ENCODE measurements at regions of chr20 and their contacts with region 1.

Region 1: GRCh38 chr20:9616833-9617489 is 102.6 kb downstream of the LAMP5 start:
- DNase-seq: peak; percentile 32
- ATAC-seq: peak; percentile 79
- H3K4me3 ChIP-seq: no peak overlapping the region
- H3K27ac ChIP-seq: no peak overlapping the region
- H3K4me1 ChIP-seq: no peaks in the 10 kb centered on the region
- H3K27me3 ChIP-seq: 0 out of 2 replicates have a peak, but pooled peaks cover 7% of the 10 kb centered on the region
- CTCF ChIP-seq: peak; percentile 62 to 91 (median 65); a peak in 5 of 6 replicates
- POLR2A ChIP-seq: no peak
- RAD21 ChIP-seq: peak; percentile 86

Region 2: DNA sequence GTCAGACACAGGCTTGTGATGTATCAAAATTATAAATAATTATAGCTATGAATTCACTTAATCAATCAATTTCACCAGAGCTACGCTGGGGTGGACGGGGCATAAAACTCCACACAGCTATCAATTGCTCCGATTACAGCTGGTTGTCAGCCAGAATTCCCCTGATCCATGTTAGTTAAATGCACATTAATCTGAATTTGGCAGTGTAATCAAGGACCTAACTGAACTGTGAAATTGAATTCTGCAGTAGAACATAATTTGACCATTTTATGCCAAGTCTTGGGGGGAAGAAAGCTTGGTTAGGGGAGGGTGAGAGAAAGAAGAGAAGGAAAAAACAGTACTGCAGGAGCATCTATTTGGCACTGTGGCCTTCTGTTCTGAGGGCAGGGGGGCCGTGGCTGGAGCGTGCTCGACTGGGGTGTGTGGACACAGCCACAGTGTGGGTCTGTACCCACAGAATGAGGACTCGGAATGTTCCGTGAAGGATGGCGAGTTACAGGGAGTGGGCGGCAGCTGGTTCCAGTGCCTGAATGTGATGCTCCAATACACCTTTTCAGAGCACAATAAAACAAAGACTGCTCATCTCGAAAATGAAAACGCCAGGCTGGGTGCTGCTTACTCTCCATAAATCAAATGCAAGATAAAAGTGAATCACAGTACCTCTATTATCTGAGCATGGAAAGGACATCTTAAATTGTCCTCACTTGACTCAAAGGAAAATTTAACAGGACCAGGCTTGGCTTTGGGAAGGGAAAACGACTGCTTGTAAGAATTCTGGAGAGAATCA is 43.4 kb before region 1 on chr20:
- CTCF ChIA-PET with region 1: no interaction called
- POLR2A ChIA-PET with region 1: no interaction called
- RAD21 ChIA-PET with region 1: no interaction called
- intact Hi-C with region 1: no loop called
- DNase-seq: no peak
- ATAC-seq: no peak
- H3K4me3 ChIP-seq: no peak overlapping the region
- H3K27ac ChIP-seq: no peak overlapping the region
- H3K4me1 ChIP-seq: no peaks in the 10 kb centered on the region
- H3K27me3 ChIP-seq: peaks cover 29% of the 10 kb centered on the region; the same call in 1 of the 2 replicates
- CTCF ChIP-seq: no peak
- POLR2A ChIP-seq: no peak
- RAD21 ChIP-seq: no peak

Region 3: DNA sequence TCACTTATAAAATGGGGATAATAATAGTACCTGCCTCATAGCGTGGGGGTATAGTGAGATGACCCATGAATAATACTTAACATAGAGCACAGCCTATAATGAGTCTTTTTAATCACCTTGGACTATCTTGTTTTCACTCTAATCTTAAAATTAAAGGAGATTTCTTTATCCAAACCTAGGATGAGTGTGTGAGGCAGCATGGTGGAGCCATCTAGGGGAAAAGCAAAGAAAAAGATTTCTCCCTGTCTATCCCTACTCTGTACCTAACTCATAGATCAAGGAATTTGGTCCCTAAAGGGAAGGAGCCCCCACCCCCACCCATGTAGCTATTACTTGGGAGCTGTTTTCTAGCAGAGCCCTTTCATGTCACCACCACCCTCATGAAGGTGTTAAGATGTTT is 267.1 kb after region 1 on chr20:
- CTCF ChIA-PET with region 1: interaction called, 27 read pairs
- POLR2A ChIA-PET with region 1: no interaction called
- RAD21 ChIA-PET with region 1: interaction called, 6 read pairs
- intact Hi-C with region 1: loop called (anchors 1 kb)
- DNase-seq: no peak
- ATAC-seq: peak; percentile 88
- H3K4me3 ChIP-seq: no peak overlapping the region
- H3K27ac ChIP-seq: no peak overlapping the region
- H3K4me1 ChIP-seq: peaks cover 0 to 4% of the 10 kb centered on the region in 2 experiments; a peak in 1 of 4 replicates
- H3K27me3 ChIP-seq: no peaks in the 10 kb centered on the region
- CTCF ChIP-seq: peak; percentile 15 to 44 (median 32); a peak in 3 of 6 replicates
- POLR2A ChIP-seq: no peak
- RAD21 ChIP-seq: peak; percentile 47

Region 4: DNA sequence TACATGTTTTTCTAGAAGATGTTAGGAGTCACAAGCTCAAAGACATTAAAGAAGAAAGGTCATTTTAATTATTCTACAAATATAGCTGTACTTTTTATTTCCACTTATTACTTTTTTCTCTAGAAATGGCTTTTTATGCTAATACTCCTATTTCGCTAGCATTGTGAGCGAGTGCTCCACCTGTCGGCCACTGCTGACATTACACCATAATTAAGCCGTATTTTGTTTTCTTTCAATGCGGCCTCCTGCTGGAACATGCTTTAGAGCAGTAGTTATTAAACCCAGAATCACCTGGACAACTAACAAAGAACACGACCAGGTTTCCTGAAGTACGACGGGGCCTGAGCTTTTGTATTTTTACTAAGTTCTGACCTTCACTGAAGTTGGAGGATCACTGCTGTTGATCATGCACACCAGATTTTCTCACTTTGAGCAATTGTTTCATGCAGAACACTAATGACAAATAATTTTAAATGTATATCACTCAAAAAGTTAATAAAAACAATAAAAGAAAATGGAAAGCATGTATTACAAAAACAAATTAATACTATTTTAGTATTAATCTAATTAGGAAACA is 296.0 kb after region 1 on chr20:
- CTCF ChIA-PET with region 1: interaction called, 14 read pairs
- POLR2A ChIA-PET with region 1: no interaction called
- RAD21 ChIA-PET with region 1: no interaction called
- intact Hi-C with region 1: loop called (anchors 1 kb)
- DNase-seq: peak; percentile 40
- ATAC-seq: peak; percentile 75
- H3K4me3 ChIP-seq: no peak overlapping the region
- H3K27ac ChIP-seq: no peak overlapping the region
- H3K4me1 ChIP-seq: no peaks in the 10 kb centered on the region
- H3K27me3 ChIP-seq: no peaks in the 10 kb centered on the region
- CTCF ChIP-seq: peak; percentile 53 to 89 (median 80); a peak in 5 of 6 replicates
- POLR2A ChIP-seq: no peak
- RAD21 ChIP-seq: peak; percentile 41

Region 5: GRCh38 chr20:9978397-9979004 is 361.5 kb after region 1 on chr20:
- CTCF ChIA-PET with region 1: interaction called, 50 read pairs
- POLR2A ChIA-PET with region 1: interaction called, 6 read pairs
- RAD21 ChIA-PET with region 1: interaction called, 5 to 8 read pairs
- intact Hi-C with region 1: no loop called
- DNase-seq: peak; percentile 79
- ATAC-seq: peak; percentile 76
- H3K4me3 ChIP-seq: peak overlapping the region; percentile 8 to 23; a peak in 2 of 4 replicates
- H3K27ac ChIP-seq: peak overlapping the region; percentile 46; the same call in 1 of the 2 replicates
- H3K4me1 ChIP-seq: peaks cover 17 to 19% of the 10 kb centered on the region in 2 experiments; a peak in 2 of 4 replicates
- H3K27me3 ChIP-seq: no peaks in the 10 kb centered on the region
- CTCF ChIP-seq: peak; percentile 59 to 91 (median 82)
- POLR2A ChIP-seq: no peak
- RAD21 ChIP-seq: peak; percentile 95

Region 6: GRCh38 chr20:10225439-10226060 is 608.6 kb after region 1 on chr20:
- CTCF ChIA-PET with region 1: interaction called, 16 read pairs
- POLR2A ChIA-PET with region 1: no interaction called
- RAD21 ChIA-PET with region 1: interaction called in 1 of 2 experiments, 3 read pairs
- intact Hi-C with region 1: loop called (anchors 5 kb)
- DNase-seq: no peak
- ATAC-seq: peak; percentile 67
- H3K4me3 ChIP-seq: no peak overlapping the region
- H3K27ac ChIP-seq: no peak overlapping the region
- H3K4me1 ChIP-seq: no peaks in the 10 kb centered on the region
- H3K27me3 ChIP-seq: peaks cover 22% of the 10 kb centered on the region
- CTCF ChIP-seq: peak in 2 of 3 experiments; percentile 46 to 49; a peak in 4 of 6 replicates
- POLR2A ChIP-seq: no peak
- RAD21 ChIP-seq: peak; percentile 33

Region 7: GRCh38 chr20:10536531-10536930 is 919.6 kb after region 1 on chr20:
- CTCF ChIA-PET with region 1: interaction called, 9 read pairs
- POLR2A ChIA-PET with region 1: no interaction called
- RAD21 ChIA-PET with region 1: no interaction called
- intact Hi-C with region 1: loop called (anchors 5 kb)
- DNase-seq: no peak
- ATAC-seq: peak; percentile 28; the same call in 1 of the 2 replicates
- H3K4me3 ChIP-seq: no peak overlapping the region
- H3K27ac ChIP-seq: no peak overlapping the region
- H3K4me1 ChIP-seq: peaks cover 54 to 60% of the 10 kb centered on the region in 2 experiments
- H3K27me3 ChIP-seq: no peaks in the 10 kb centered on the region
- CTCF ChIP-seq: peak; percentile 45 to 51 (median 49); a peak in 5 of 6 replicates
- POLR2A ChIP-seq: no peak
- RAD21 ChIP-seq: peak; percentile 78

Region 8: GRCh38 chr20:11544029-11544678 is 1927.2 kb after region 1 on chr20:
- CTCF ChIA-PET with region 1: interaction called, 5 read pairs
- POLR2A ChIA-PET with region 1: no interaction called
- RAD21 ChIA-PET with region 1: interaction called in 1 of 2 experiments, 4 read pairs
- intact Hi-C with region 1: loop called (anchors 1 kb)
- DNase-seq: peak; percentile 64
- ATAC-seq: peak; percentile 81
- H3K4me3 ChIP-seq: 0 out of 4 replicates have a peak overlapping the region, but pooled peaks of 1 of the 2 experiments have one; percentile 12
- H3K27ac ChIP-seq: no peak overlapping the region
- H3K4me1 ChIP-seq: peaks cover 8 to 18% of the 10 kb centered on the region in 2 experiments
- H3K27me3 ChIP-seq: no peaks in the 10 kb centered on the region
- CTCF ChIP-seq: peak; percentile 33 to 70 (median 56); a peak in 3 of 6 replicates
- POLR2A ChIP-seq: no peak
- RAD21 ChIP-seq: peak; percentile 88

Measured in HCT116 (cell line).